Naive thymus-derived CD4-positive, alpha-beta T cell (primary cell): ENCODE measurements at regions of chr3 and their contacts with region 1.

Region 1: DNA sequence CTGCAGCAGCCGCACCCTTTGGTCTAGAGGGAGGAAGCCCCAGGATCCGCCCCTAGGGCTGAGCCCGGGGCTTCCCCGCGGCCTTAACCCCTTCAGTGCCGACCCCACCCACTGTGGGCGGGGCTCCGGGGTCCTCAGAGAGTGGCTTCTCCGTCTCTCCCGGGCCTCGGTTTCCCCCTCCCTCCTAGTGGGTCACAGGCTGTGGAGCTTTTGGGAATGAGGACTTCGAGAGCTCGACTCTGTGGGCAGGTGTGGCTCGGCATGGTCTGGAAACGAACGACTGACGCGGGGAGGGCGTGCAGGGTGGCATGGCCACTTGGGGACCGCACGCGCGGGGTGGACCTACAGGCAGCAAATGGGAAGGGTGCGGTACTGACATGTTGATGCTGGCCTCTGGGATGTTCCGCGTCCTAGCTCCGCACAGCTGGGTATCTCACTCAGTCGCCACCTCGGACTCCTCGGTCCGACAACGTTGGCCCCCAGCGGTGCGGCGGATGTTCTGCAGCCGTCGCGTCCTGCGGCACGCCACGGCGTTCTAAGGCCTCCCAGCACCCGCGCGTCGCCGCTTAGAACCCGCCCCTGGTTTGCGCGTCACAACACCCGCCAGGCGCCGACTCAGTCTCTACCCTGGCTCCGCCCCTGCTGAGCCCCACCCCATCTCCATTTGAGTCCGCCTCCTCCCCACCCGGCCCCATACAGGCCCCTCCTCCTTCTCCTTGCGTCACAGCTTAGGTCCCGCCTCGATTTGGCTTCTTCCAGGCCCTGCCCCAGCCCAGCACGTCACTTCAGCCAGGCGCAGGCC is at the starts of genes HYAL3 and NAA80:
- DNase-seq: peak; percentile 94 to 100 (median 99)
- ATAC-seq: peak; percentile 93
- H3K4me3 ChIP-seq: peak within 1 kb of the TSS; percentile 97
- H3K4me3 Mint-ChIP-seq: peak within 1 kb of the TSS; percentile 84 to 99 (median 97)
- H3K27ac ChIP-seq: peak within 1 kb of the TSS; percentile 86
- H3K27ac Mint-ChIP-seq: peak within 1 kb of the TSS; percentile 90 to 100 (median 99)
- H3K4me1 ChIP-seq: peaks cover 19 to 20% of the 10 kb centered on the region in 2 donors
- H3K4me1 Mint-ChIP-seq: peaks cover 12 to 36% (median 22%) of the 10 kb centered on the region in 7 donors
- H3K27me3 ChIP-seq: no peaks in the 10 kb centered on the region
- H3K27me3 Mint-ChIP-seq: no peaks in the 10 kb centered on the region
- total RNA-seq, gene HYAL3: 3.4 to 10.7 (median 4.2) TPM
- total RNA-seq, gene NAA80: 30.2 to 44.9 (median 33.6) TPM

Region 2: DNA sequence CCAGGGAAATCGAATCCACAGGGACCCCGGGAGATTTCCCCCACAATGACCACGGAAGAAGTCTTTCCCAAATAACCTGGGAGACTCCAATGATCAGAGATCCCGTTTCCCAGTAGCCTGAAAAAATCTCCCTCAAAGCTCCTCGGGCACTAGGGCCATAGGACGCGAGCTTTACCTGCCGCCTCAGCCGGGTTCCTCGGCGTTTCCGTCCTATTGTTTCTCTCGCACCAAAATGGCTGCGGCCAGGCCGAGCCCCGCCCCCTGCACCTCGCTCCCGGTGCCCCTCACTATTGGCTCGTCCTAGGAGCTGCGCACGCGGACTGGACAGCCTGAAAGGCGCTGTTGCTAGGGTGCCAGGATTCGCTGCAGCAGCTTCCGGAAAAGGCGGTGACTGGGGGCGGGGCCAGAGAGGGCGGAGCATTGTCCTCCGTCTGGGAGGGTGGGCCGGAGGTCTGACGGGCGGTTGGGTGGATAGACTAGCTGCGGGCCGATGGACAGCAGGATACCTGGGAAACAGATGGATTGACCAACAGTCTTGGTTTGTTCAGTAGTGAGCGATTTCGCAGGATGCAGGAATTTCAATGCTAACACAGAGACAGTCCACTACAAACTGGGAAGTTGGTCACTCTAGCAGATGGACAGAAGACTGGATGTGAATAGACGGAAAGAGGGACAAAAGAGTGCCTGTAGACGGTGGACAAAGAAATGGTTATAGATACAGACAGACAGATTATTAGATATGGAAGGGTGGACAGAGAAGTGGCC is 1581.9 kb before region 1 on chr3 and contains the start of gene IP6K2:
- CTCF ChIA-PET with region 1: no interaction called
- POLR2A ChIA-PET with region 1: no interaction called
- intact Hi-C with region 1: loop called in 1 of 2 experiments (anchors 10 kb)
- DNase-seq: peak; percentile 92 to 99 (median 97)
- ATAC-seq: peak; percentile 100
- H3K4me3 ChIP-seq: peak within 1 kb of the TSS; percentile 99
- H3K4me3 Mint-ChIP-seq: peak within 1 kb of the TSS; percentile 94 to 99 (median 98)
- H3K27ac ChIP-seq: peak within 1 kb of the TSS; percentile 84
- H3K27ac Mint-ChIP-seq: peak within 1 kb of the TSS; percentile 83 to 99 (median 96)
- H3K4me1 ChIP-seq: peaks cover 23 to 29% of the 10 kb centered on the region in 2 donors
- H3K4me1 Mint-ChIP-seq: peaks cover 33 to 46% (median 39%) of the 10 kb centered on the region in 7 donors
- H3K27me3 ChIP-seq: no peaks in the 10 kb centered on the region
- H3K27me3 Mint-ChIP-seq: peaks cover 0 to 22% (median 0%) of the 10 kb centered on the region in 5 donors
- total RNA-seq, gene IP6K2: 72.0 to 94.3 (median 85.9) TPM

Region 3: GRCh38 chr3:49939858-49940666 is 359.0 kb before region 1 on chr3 and contains the start of gene RBM6:
- CTCF ChIA-PET with region 1: no interaction called
- POLR2A ChIA-PET with region 1: no interaction called
- intact Hi-C with region 1: loop called in 1 of 2 experiments (anchors 2 kb)
- DNase-seq: peak; percentile 84 to 95 (median 93)
- ATAC-seq: peak; percentile 98
- H3K4me3 ChIP-seq: peak within 1 kb of the TSS; percentile 88
- H3K4me3 Mint-ChIP-seq: peak within 1 kb of the TSS; percentile 93 to 100 (median 98)
- H3K27ac ChIP-seq: peak within 1 kb of the TSS; percentile 97
- H3K27ac Mint-ChIP-seq: peak within 1 kb of the TSS; percentile 91 to 99 (median 97)
- H3K4me1 ChIP-seq: peaks cover 8 to 15% of the 10 kb centered on the region in 2 donors
- H3K4me1 Mint-ChIP-seq: peaks cover 7 to 41% (median 32%) of the 10 kb centered on the region in 7 donors
- H3K27me3 ChIP-seq: no peaks in the 10 kb centered on the region
- H3K27me3 Mint-ChIP-seq: peaks cover 0 to 1% (median 0%) of the 10 kb centered on the region in 5 donors
- total RNA-seq, gene RBM6: 103 to 208 (median 153) TPM

Region 4: GRCh38 chr3:50245831-50246516 is 53.1 kb before region 1 on chr3:
- CTCF ChIA-PET with region 1: interaction called, 6 read pairs
- POLR2A ChIA-PET with region 1: interaction called, 6 read pairs
- intact Hi-C with region 1: loop called (anchors 1 kb)
- DNase-seq: peak; percentile 88 to 99 (median 94)
- ATAC-seq: peak; percentile 90
- H3K4me3 ChIP-seq: peak overlapping the region; percentile 52
- H3K4me3 Mint-ChIP-seq: peak overlapping the region; percentile 77 to 89 (median 82)
- H3K27ac ChIP-seq: peak overlapping the region; percentile 88
- H3K27ac Mint-ChIP-seq: peak overlapping the region; percentile 80 to 96 (median 95)
- H3K4me1 ChIP-seq: peaks cover 61 to 87% of the 10 kb centered on the region in 2 donors
- H3K4me1 Mint-ChIP-seq: peaks cover 57 to 90% (median 74%) of the 10 kb centered on the region in 7 donors
- H3K27me3 ChIP-seq: no peaks in the 10 kb centered on the region
- H3K27me3 Mint-ChIP-seq: no peaks in the 10 kb centered on the region

Region 5: GRCh38 chr3:50337191-50337841 is 38.3 kb after region 1 on chr3:
- CTCF ChIA-PET with region 1: interaction called, 3 read pairs
- POLR2A ChIA-PET with region 1: interaction called, 41 read pairs
- intact Hi-C with region 1: loop called (anchors 1 kb)
- DNase-seq: peak; percentile 83 to 98 (median 91)
- ATAC-seq: peak; percentile 88
- H3K4me3 ChIP-seq: peak overlapping the region; percentile 83
- H3K4me3 Mint-ChIP-seq: peak overlapping the region; percentile 92 to 97 (median 95)
- H3K27ac ChIP-seq: peak overlapping the region; percentile 92
- H3K27ac Mint-ChIP-seq: peak overlapping the region; percentile 92 to 97 (median 96)
- H3K4me1 ChIP-seq: peaks cover 43 to 58% of the 10 kb centered on the region in 2 donors
- H3K4me1 Mint-ChIP-seq: peaks cover 35 to 73% (median 68%) of the 10 kb centered on the region in 7 donors
- H3K27me3 ChIP-seq: no peaks in the 10 kb centered on the region
- H3K27me3 Mint-ChIP-seq: peaks cover 0 to 3% (median 0%) of the 10 kb centered on the region in 5 donors

Region 6: GRCh38 chr3:50580683-50581458 is 281.8 kb after region 1 on chr3:
- CTCF ChIA-PET with region 1: no interaction called
- POLR2A ChIA-PET with region 1: no interaction called
- intact Hi-C with region 1: no loop called
- DNase-seq: peak in 1 of 9 donors; percentile 32
- ATAC-seq: peak; percentile 56
- H3K4me3 ChIP-seq: peak overlapping the region; percentile 12
- H3K4me3 Mint-ChIP-seq: peak overlapping the region in 4 of 10 donors; percentile 1 to 52 (median 32)
- H3K27ac ChIP-seq: peak overlapping the region; percentile 42
- H3K27ac Mint-ChIP-seq: peak overlapping the region; percentile 47 to 91 (median 68)
- H3K4me1 ChIP-seq: peaks cover 24% of the 10 kb centered on the region in 2 donors
- H3K4me1 Mint-ChIP-seq: peaks cover 14 to 74% (median 28%) of the 10 kb centered on the region in 7 donors
- H3K27me3 ChIP-seq: no peaks in the 10 kb centered on the region
- H3K27me3 Mint-ChIP-seq: no peaks in the 10 kb centered on the region

Region 7: DNA sequence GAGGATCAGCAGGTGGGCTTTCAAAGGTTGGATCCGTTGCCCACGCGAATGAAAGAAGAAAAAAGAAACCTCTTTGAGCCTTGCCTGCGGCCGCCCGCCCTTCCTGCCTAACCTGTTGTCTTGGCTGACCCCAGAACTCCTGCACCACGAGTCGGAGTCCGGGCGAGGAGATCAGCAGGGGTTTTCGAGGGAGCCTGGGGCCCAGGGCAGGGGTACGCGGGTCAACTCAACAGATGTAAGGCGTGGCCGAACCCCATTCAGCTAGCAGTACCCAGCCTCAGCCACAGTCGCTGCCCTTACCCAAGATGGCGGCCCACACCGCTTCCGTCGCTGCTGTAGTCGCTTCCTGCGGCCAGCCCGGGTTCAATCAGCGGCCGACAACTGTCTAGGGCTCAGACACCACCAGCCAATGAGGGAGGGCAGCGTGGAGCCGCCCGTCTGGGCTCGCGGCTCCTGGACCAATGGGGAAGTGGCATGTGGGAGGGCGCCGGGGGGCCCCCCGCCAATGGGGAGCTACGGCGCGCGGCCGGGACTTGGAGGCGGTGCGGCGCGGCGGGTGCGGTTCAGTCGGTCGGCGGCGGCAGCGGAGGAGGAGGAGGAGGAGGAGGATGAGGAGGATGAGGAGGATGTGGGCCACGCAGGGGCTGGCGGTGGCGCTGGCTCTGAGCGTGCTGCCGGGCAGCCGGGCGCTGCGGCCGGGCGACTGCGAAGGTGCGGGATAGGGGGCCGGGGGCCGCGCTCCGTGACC is 1085.9 kb after region 1 on chr3 and contains the start of gene MANF:
- CTCF ChIA-PET with region 1: no interaction called
- POLR2A ChIA-PET with region 1: no interaction called
- intact Hi-C with region 1: loop called in 1 of 2 experiments (anchors 1 kb)
- DNase-seq: peak; percentile 87 to 98 (median 98)
- ATAC-seq: peak; percentile 97
- H3K4me3 ChIP-seq: peak within 1 kb of the TSS; percentile 92
- H3K4me3 Mint-ChIP-seq: peak within 1 kb of the TSS; percentile 89 to 99 (median 98)
- H3K27ac ChIP-seq: peak within 1 kb of the TSS; percentile 98
- H3K27ac Mint-ChIP-seq: peak within 1 kb of the TSS; percentile 98 to 99 (median 99)
- H3K4me1 ChIP-seq: peaks cover 22 to 31% of the 10 kb centered on the region in 2 donors
- H3K4me1 Mint-ChIP-seq: peaks cover 32 to 48% (median 46%) of the 10 kb centered on the region in 7 donors
- H3K27me3 ChIP-seq: no peaks in the 10 kb centered on the region
- H3K27me3 Mint-ChIP-seq: no peaks in the 10 kb centered on the region
- total RNA-seq, gene MANF: 28.2 to 182 (median 68.0) TPM